Activated CD8-positive, alpha-beta T cell treated with anti-CD3 and anti-CD28 coated beads, Interleukin-2, amount 10 ng/mL, durations not matched to agents 7 days and 5 days (primary cell): ENCODE measurements at regions of chr20 and their contacts with region 1.

Region 1: GRCh38 chr20:40741507-40742106 is 52.6 kb upstream of the MAFB start:
- DNase-seq: peak; percentile 71
- ATAC-seq: no peak
- H3K4me3 Mint-ChIP-seq: no peak overlapping the region
- H3K27ac Mint-ChIP-seq: no peak overlapping the region
- H3K4me1 Mint-ChIP-seq: no peaks in the 10 kb centered on the region
- H3K27me3 Mint-ChIP-seq: peaks cover 18% of the 10 kb centered on the region

Region 2: GRCh38 chr20:40600441-40601219 is 141.0 kb before region 1 on chr20:
- CTCF ChIA-PET with region 1: no interaction called
- POLR2A ChIA-PET with region 1: no interaction called
- DNase-seq: no peak
- ATAC-seq: no peak
- H3K4me3 Mint-ChIP-seq: no peak overlapping the region
- H3K27ac Mint-ChIP-seq: no peak overlapping the region
- H3K4me1 Mint-ChIP-seq: no peaks in the 10 kb centered on the region
- H3K27me3 Mint-ChIP-seq: peaks cover 4% of the 10 kb centered on the region

Region 3: GRCh38 chr20:40663991-40664880 is 77.4 kb before region 1 on chr20:
- CTCF ChIA-PET with region 1: no interaction called
- POLR2A ChIA-PET with region 1: no interaction called
- DNase-seq: no peak
- ATAC-seq: no peak
- H3K4me3 Mint-ChIP-seq: no peak overlapping the region
- H3K27ac Mint-ChIP-seq: no peak overlapping the region
- H3K4me1 Mint-ChIP-seq: no peaks in the 10 kb centered on the region
- H3K27me3 Mint-ChIP-seq: peaks cover 2% of the 10 kb centered on the region

Region 4: DNA sequence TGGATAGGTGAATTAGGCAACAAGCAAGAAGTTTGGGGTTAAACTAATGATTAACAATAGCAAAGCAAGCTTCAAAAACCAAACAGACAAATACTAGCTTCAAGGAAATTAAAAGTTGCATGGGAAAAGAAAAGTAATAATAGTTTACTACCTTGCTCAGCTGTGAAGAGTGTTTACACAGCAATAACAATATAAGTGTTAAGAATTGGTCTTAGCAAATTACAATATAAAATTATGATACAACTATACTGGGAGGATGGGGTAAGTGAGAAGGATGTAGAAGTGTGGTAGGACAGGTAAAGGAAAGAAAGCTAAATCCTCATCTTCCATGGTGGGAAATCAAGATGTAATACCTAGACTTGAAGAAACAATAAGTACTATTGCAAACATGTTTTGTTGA is 85.1 kb after region 1 on chr20:
- CTCF ChIA-PET with region 1: no interaction called
- POLR2A ChIA-PET with region 1: no interaction called
- DNase-seq: no peak
- ATAC-seq: no peak
- H3K4me3 Mint-ChIP-seq: no peak overlapping the region
- H3K27ac Mint-ChIP-seq: no peak overlapping the region
- H3K4me1 Mint-ChIP-seq: no peaks in the 10 kb centered on the region
- H3K27me3 Mint-ChIP-seq: peaks cover 25% of the 10 kb centered on the region

Region 5: GRCh38 chr20:40945754-40946450 is 204.3 kb after region 1 on chr20:
- CTCF ChIA-PET with region 1: interaction called, 21 read pairs
- POLR2A ChIA-PET with region 1: no interaction called
- DNase-seq: peak; percentile 41
- ATAC-seq: peak; percentile 55
- H3K4me3 Mint-ChIP-seq: no peak overlapping the region
- H3K27ac Mint-ChIP-seq: no peak overlapping the region
- H3K4me1 Mint-ChIP-seq: no peaks in the 10 kb centered on the region
- H3K27me3 Mint-ChIP-seq: peaks cover 14% of the 10 kb centered on the region

Region 6: DNA sequence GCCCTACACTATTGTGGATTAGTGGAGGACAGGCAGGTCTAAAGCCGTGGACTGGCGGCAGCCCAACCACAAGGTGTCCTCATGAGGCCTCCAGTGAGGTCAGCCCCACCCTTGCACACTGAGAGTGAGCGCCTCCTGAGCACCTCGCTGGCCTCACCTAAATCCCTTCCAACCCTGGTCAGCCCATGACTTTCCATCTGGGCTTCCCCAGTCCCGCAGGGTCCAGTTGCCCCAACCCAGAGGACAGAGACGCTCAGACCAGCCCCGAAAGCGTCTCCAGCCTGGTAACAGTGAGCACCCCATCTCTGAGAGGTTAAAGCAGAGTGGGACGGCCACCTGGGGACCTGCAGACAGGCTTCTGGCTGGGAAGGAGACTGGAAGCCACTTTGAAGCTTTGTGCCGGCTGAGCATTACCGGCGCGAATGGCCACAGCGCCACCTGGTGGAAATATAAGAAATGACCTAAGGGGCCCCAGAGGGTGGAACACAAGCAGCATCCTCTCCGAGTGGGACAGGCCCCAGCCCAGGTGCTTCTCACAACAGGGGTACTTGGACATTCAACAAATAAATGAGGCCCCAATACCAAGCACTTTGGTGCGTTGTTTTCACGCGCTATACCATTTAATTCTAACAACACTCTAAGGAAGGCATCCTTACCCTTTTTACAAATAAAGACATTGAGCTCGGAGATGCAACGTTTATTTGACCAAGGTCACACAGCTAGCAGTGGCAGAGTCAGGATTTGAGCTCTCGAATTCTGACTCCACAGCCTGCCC is 221.3 kb after region 1 on chr20:
- CTCF ChIA-PET with region 1: interaction called, 116 read pairs
- POLR2A ChIA-PET with region 1: interaction called, 4 read pairs
- DNase-seq: peak; percentile 86
- ATAC-seq: peak; percentile 91
- H3K4me3 Mint-ChIP-seq: no peak overlapping the region
- H3K27ac Mint-ChIP-seq: no peak overlapping the region
- H3K4me1 Mint-ChIP-seq: peaks cover 21% of the 10 kb centered on the region
- H3K27me3 Mint-ChIP-seq: peaks cover 9% of the 10 kb centered on the region

Region 7: DNA sequence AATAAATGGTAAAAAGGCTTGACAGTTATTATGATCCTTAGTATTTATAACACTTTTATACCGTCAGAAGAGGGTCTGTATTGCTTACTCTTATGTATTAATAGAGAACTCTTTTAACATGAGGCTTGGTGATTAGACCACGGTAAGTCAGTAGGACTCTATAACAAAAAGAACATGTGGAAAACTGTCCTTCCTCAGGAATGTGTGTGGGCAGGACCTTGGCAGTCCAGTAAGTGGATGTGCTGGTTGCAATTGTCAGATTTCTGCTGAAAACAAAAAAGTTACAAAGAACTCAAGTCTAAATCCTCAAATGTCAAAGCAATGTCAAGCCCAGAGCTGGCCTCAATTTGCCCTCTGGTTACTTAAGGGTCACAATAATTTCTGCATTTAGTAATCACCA is 476.9 kb after region 1 on chr20:
- CTCF ChIA-PET with region 1: no interaction called
- POLR2A ChIA-PET with region 1: no interaction called
- DNase-seq: no peak
- ATAC-seq: no peak
- H3K4me3 Mint-ChIP-seq: no peak overlapping the region
- H3K27ac Mint-ChIP-seq: no peak overlapping the region
- H3K4me1 Mint-ChIP-seq: no peaks in the 10 kb centered on the region
- H3K27me3 Mint-ChIP-seq: peaks cover 3% of the 10 kb centered on the region